ENCODE measurements at regions of chr2 and their contacts with region 1.

Region 1: DNA sequence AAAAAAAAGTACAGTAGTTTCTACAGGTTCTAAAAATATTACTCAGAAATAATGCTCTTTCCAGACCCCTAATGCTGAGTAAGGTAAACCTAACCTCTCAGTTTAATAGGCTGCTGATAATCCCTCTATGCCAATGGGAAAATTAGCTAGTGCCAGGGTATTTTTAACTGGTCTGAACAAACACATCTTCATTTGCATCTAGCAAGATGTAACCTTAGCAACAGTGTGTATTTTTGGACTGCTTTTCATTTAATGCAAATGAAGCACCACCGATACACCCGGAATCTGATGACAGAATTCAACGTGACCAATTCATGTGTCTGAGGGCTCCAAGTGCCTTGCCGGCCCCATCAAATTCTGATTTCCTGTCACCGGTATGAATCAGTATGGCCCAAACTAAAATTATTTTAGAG is 47.4 kb upstream of the CYRIA start:
- DNase-seq: no peak
- ATAC-seq: peak; percentile 92
- H3K4me3 ChIP-seq: no peak overlapping the region
- H3K27ac ChIP-seq: no peak overlapping the region
- H3K4me1 ChIP-seq: peaks cover 2% of the 10 kb centered on the region; the same call in 1 of the 2 replicates
- H3K27me3 ChIP-seq: 0 out of 4 replicates have a peak, but pooled peaks cover 0 to 2% of the 10 kb centered on the region in 2 experiments
- CTCF ChIP-seq: no peak
- EP300 ChIP-seq: peak; percentile 27 to 54; a peak in 2 of 4 replicates
- POLR2A ChIP-seq: no peak
- RAD21 ChIP-seq: no peak

Region 2: GRCh38 chr2:16630463-16630862 is 82.6 kb before region 1 on chr2:
- CTCF ChIA-PET with region 1: interaction called, 3 read pairs
- POLR2A ChIA-PET with region 1: interaction called, 3 read pairs
- RAD21 ChIA-PET with region 1: interaction called, 7 read pairs
- SMC1A ChIA-PET with region 1: interaction called, 14 read pairs
- in situ Hi-C with region 1: no loop called
- intact Hi-C with region 1: no loop called
- DNase-seq: no peak
- ATAC-seq: peak; percentile 69
- H3K4me3 ChIP-seq: no peak overlapping the region
- H3K27ac ChIP-seq: no peak overlapping the region
- H3K4me1 ChIP-seq: peaks cover 10% of the 10 kb centered on the region
- H3K27me3 ChIP-seq: peaks cover 0 to 16% of the 10 kb centered on the region in 2 experiments
- CTCF ChIP-seq: peak; percentile 18 to 31 (median 27); a peak in 3 of 6 replicates
- EP300 ChIP-seq: no peak
- POLR2A ChIP-seq: no peak
- RAD21 ChIP-seq: peak; percentile 60

Region 3: DNA sequence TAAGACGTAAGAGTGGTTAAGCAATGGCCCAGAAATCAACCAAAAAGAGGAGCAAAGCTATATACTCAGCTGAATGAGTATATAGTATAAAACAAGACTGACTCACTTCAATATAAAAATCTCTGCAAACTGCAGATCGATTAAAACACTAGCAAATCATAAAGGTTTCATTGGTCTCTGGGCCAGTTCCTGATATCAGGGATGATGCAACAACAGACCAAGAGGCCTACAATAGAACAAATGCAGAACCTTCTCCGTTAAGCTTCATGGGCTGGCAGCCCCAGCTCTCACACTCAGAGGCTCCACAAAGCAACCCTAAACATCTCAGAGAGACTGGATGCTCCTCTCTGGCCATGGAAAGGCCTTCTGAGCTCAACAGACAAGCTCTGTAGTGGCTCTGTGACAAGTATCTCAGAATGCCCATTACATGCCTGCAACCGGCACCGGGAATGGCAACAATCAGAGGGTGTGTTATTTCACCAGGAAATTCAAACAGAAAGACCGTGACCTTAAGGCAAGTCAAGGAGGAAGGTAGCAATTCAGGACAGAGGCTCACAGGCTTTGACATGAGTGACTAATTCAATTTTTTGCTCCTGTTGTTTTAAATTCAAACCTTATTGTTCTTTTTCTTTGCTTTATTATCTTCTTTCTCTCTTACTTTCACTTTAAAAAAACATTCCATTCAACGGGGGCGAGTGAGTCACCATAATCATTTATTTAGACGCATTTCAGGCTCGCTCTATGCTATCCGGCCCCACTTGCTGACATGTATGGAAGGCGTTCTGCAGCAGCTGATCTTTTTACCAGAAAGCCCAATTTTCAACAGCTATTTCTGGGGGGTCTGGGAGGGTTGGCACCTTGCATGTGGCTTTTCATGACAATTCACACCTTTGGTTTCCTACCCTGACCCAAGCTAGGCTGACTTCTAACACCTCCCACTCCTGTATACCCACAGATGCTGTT is 62.4 kb before region 1 on chr2:
- CTCF ChIA-PET with region 1: interaction called, 6 read pairs
- POLR2A ChIA-PET with region 1: interaction called, 33 read pairs
- RAD21 ChIA-PET with region 1: interaction called, 156 read pairs
- SMC1A ChIA-PET with region 1: interaction called, 141 read pairs
- in situ Hi-C with region 1: no loop called
- intact Hi-C with region 1: no loop called
- DNase-seq: no peak
- ATAC-seq: peak; percentile 6; the same call in 2 of the 3 replicates
- H3K4me3 ChIP-seq: no peak overlapping the region
- H3K27ac ChIP-seq: no peak overlapping the region
- H3K4me1 ChIP-seq: peaks cover 40% of the 10 kb centered on the region
- H3K27me3 ChIP-seq: no peaks in the 10 kb centered on the region; a peak in 1 of 4 replicates
- CTCF ChIP-seq: no peak
- EP300 ChIP-seq: 0 out of 4 replicates have a peak, but pooled peaks of 1 of the 2 experiments have one; percentile 35
- POLR2A ChIP-seq: no peak
- RAD21 ChIP-seq: no peak

Measured in GM12878 (cell line).